H1 (cell line): ENCODE measurements at regions of chr20 and their contacts with region 1.

Region 1: DNA sequence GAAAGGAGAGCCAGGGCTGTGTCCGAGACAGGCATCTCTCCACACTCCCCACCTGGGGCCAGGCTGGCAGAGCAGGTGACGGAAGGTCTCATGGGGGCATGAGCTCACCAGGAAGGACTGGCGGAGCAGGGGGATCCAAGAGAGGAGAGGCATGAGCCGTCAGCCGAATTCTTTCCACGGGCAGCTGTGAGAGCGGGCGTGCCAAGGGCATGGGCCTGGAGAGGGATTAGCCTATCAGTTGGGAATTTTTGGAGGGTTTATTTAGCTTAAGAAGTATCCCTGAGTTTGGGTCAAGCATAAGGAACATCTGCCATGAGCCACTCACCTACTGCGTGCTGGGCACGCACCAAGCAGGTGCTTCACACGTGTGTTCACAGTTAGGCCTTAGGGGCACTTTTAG is 60.2 kb upstream of the ZNFX1 start:
- DNase-seq: no peak
- H3K4me3 ChIP-seq: no peak overlapping the region
- H3K27ac ChIP-seq: no peak overlapping the region
- H3K4me1 ChIP-seq: no peaks in the 10 kb centered on the region
- H3K27me3 ChIP-seq: no peaks in the 10 kb centered on the region
- CTCF ChIP-seq: no peak
- EP300 ChIP-seq: no peak
- POLR2A ChIP-seq: no peak
- RAD21 ChIP-seq: no peak

Region 2: GRCh38 chr20:49216991-49217578 is 121.0 kb before region 1 on chr20:
- CTCF ChIA-PET with region 1: no interaction called
- POLR2A ChIA-PET with region 1: no interaction called
- DNase-seq: peak; percentile 83 to 98
- H3K4me3 ChIP-seq: peak overlapping the region in 2 of 4 experiments; percentile 10 to 21; a peak in 3 of 8 replicates
- H3K27ac ChIP-seq: no peak overlapping the region
- H3K4me1 ChIP-seq: peaks cover 0 to 5% (median 3%) of the 10 kb centered on the region in 4 experiments; a peak in 3 of 7 replicates
- H3K27me3 ChIP-seq: no peaks in the 10 kb centered on the region
- CTCF ChIP-seq: peak; percentile 81 to 95 (median 85)
- EP300 ChIP-seq: 0 out of 3 replicates have a peak, but pooled peaks of 1 of the 2 experiments have one; percentile 37
- POLR2A ChIP-seq: no peak; a peak in 1 of 3 replicates
- RAD21 ChIP-seq: peak; percentile 68 to 78

Region 3: GRCh38 chr20:49356676-49357075 is 18.6 kb after region 1 on chr20:
- CTCF ChIA-PET with region 1: interaction called, 11 read pairs
- POLR2A ChIA-PET with region 1: no interaction called
- DNase-seq: no peak
- H3K4me3 ChIP-seq: no peak overlapping the region
- H3K27ac ChIP-seq: no peak overlapping the region
- H3K4me1 ChIP-seq: no peaks in the 10 kb centered on the region
- H3K27me3 ChIP-seq: no peaks in the 10 kb centered on the region; a peak in 1 of 7 replicates
- CTCF ChIP-seq: no peak
- EP300 ChIP-seq: no peak
- POLR2A ChIP-seq: no peak
- RAD21 ChIP-seq: no peak

Region 4: DNA sequence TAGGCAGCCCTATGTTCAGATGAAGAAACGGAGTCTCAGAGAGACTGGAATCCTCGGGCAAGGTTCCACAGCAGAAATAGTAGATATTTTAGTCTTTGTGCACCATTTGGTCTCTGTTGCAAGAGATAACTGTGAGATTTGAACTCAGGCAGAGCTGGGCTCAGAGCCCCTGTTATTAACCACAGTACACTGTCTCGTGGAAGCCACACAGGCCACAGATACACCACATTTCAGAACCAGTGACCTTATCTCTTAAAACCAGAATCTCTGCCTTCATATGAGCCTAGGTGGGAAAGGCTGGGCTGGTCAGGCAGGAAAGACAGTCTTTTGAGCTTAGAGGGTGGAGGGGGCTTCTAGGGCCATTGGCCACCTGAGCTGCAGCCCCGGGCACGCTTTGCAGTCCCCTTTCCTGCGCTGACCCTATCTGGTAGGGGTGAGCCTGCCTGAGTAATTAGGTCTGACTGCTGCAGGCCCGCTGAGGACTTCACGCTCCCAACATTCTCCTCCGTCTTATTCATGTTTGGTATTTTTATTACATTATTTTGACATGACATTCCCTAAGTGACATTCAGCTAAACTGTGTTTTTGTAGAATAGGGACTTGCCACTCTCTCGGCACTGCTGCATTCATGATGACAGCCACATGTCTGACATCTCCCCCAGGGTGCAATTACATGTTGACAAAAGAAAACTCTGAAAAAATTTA is 73.3 kb after region 1 on chr20:
- CTCF ChIA-PET with region 1: interaction called, 10 read pairs
- POLR2A ChIA-PET with region 1: no interaction called
- DNase-seq: no peak
- H3K4me3 ChIP-seq: no peak overlapping the region
- H3K27ac ChIP-seq: no peak overlapping the region
- H3K4me1 ChIP-seq: no peaks in the 10 kb centered on the region
- H3K27me3 ChIP-seq: no peaks in the 10 kb centered on the region
- CTCF ChIP-seq: no peak
- EP300 ChIP-seq: no peak
- POLR2A ChIP-seq: no peak
- RAD21 ChIP-seq: no peak

Region 5: DNA sequence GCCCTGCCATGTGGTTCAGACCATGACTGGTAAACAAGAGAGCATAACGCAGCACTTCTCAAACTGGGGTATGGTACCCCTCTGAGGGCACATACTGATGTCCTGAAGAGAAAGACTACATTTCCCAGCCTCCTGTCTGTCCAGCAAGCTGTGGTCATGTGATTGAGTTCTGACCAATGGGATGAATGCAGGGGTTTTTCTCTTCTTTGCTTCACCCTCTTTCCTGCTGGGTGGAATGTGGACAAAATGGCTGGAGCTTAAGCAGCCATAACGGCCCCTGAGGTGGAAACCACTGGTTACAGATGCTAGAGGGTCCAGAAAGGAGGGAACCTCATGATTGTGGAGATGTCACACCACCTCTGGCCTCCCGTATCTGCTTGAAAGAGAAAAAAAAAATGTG is 163.9 kb after region 1 on chr20:
- CTCF ChIA-PET with region 1: interaction called, 82 read pairs
- POLR2A ChIA-PET with region 1: interaction called, 3 read pairs
- DNase-seq: no peak
- H3K4me3 ChIP-seq: no peak overlapping the region
- H3K27ac ChIP-seq: no peak overlapping the region
- H3K4me1 ChIP-seq: peaks cover 0 to 3% (median 0%) of the 10 kb centered on the region in 4 experiments; a peak in 2 of 7 replicates
- H3K27me3 ChIP-seq: no peaks in the 10 kb centered on the region
- CTCF ChIP-seq: no peak
- EP300 ChIP-seq: no peak
- POLR2A ChIP-seq: no peak
- RAD21 ChIP-seq: no peak

Region 6: GRCh38 chr20:49534255-49534712 is 196.2 kb after region 1 on chr20:
- CTCF ChIA-PET with region 1: interaction called, 23 read pairs
- POLR2A ChIA-PET with region 1: interaction called, 3 read pairs
- DNase-seq: peak in 1 of 2 experiments; percentile 85
- H3K4me3 ChIP-seq: no peak overlapping the region
- H3K27ac ChIP-seq: no peak overlapping the region
- H3K4me1 ChIP-seq: no peaks in the 10 kb centered on the region
- H3K27me3 ChIP-seq: no peaks in the 10 kb centered on the region
- CTCF ChIP-seq: peak; percentile 48 to 85 (median 81)
- EP300 ChIP-seq: no peak
- POLR2A ChIP-seq: no peak
- RAD21 ChIP-seq: peak; percentile 73 to 80